Activated CD4-positive, alpha-beta memory T cell treated with anti-CD3 and anti-CD28 coated beads for 36 hours (primary cell): ENCODE measurements at regions of chr1 and their contacts with region 1.

Region 1: GRCh38 chr1:30779294-30780071 is 21.9 kb upstream of the LAPTM5 start:
- DNase-seq: peak; percentile 96
- H3K4me3 Mint-ChIP-seq: no peak overlapping the region
- H3K27ac Mint-ChIP-seq: no peak overlapping the region
- H3K4me1 Mint-ChIP-seq: peaks cover 5% of the 10 kb centered on the region
- H3K27me3 Mint-ChIP-seq: no peaks in the 10 kb centered on the region

Region 2: DNA sequence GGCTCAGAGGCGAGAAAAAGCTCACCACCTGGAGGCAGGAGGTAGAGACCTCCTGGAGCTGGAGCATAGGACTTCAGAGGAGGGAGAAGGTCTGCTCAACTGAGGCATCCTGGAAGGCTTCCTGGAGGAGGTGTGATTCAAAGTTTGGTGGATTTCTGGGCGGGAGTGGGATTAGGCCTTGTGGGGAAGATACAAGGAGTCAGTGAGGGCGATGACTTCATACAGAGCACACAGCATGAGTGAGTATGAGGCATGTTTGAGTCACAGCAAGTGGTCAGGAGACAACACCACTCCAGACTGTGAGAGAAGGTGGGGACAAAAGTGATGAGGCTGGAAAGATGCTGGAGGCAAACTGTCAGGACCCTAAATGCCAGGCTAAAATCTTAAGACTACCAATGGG is 133.7 kb before region 1 on chr1:
- CTCF ChIA-PET with region 1: no interaction called
- POLR2A ChIA-PET with region 1: no interaction called
- intact Hi-C with region 1: no loop called
- DNase-seq: no peak
- H3K4me3 Mint-ChIP-seq: no peak overlapping the region
- H3K27ac Mint-ChIP-seq: no peak overlapping the region
- H3K4me1 Mint-ChIP-seq: peaks cover 5% of the 10 kb centered on the region
- H3K27me3 Mint-ChIP-seq: peaks cover 36% of the 10 kb centered on the region

Region 3: DNA sequence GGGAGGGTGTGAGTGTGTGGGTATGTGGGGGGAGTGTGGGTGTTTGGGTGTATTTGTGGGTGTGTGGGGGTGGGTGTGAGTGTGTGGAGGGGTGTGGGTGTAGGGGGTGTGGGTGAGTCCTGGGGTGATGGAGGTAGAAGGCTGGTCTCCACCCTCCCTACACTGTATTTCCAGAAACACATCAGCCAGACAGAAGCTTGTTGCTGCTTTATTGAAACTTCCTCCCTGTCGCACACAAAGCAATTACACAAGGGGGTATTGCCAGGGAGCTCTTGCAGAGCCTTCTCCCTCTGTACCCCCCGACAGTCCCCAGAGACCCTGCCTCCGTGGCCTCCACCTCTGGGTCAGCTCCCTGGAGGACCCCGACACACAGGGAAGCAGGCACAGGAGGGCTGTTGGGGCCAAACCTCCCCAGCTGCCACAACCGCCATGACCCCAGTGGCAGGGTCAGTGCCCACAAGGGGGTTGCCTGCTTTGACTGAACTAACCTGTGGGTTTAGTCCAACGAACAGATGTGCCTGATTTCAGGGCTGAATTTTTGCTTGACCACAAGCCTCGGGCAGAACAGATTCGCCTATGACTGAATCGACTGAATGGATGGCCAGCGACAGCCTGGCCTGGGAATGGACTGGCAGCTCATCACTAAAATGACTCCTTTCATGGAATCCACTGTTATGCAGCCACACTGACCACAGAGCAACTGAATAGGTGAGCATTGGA is 47.0 kb before region 1 on chr1:
- CTCF ChIA-PET with region 1: interaction called, 81 read pairs
- POLR2A ChIA-PET with region 1: no interaction called
- intact Hi-C with region 1: no loop called
- DNase-seq: no peak
- H3K4me3 Mint-ChIP-seq: no peak overlapping the region
- H3K27ac Mint-ChIP-seq: peak overlapping the region; percentile 43
- H3K4me1 Mint-ChIP-seq: peaks cover 12% of the 10 kb centered on the region
- H3K27me3 Mint-ChIP-seq: no peaks in the 10 kb centered on the region

Region 4: DNA sequence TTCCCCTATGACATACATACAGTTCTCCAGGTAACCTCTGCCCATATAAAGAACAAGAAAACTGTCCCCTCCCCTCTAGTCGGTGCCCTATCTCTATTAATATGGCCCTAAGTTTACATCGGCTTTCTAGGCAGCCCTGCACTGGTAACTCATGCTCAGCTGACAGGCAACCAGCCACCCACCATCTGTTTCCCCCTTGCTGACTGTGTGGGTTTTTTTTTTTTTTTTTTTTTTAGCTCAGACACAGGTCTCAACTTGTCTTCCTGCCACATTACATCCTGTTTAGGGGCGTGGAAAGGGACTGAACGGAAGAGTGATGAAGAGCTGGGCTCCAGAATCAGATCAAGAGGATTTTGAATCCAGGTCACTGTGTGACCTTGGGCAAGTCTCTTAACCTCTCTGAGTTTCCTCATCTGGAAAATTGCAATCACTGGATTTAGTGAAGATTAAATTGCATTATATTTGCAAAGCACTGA is 35.9 kb before region 1 on chr1:
- CTCF ChIA-PET with region 1: interaction called, 63 read pairs
- POLR2A ChIA-PET with region 1: interaction called, 3 read pairs
- intact Hi-C with region 1: loop called (anchors 1 kb)
- DNase-seq: peak; percentile 80
- H3K4me3 Mint-ChIP-seq: peak overlapping the region; percentile 50
- H3K27ac Mint-ChIP-seq: peak overlapping the region; percentile 96
- H3K4me1 Mint-ChIP-seq: peaks cover 92% of the 10 kb centered on the region
- H3K27me3 Mint-ChIP-seq: no peaks in the 10 kb centered on the region

Region 5: DNA sequence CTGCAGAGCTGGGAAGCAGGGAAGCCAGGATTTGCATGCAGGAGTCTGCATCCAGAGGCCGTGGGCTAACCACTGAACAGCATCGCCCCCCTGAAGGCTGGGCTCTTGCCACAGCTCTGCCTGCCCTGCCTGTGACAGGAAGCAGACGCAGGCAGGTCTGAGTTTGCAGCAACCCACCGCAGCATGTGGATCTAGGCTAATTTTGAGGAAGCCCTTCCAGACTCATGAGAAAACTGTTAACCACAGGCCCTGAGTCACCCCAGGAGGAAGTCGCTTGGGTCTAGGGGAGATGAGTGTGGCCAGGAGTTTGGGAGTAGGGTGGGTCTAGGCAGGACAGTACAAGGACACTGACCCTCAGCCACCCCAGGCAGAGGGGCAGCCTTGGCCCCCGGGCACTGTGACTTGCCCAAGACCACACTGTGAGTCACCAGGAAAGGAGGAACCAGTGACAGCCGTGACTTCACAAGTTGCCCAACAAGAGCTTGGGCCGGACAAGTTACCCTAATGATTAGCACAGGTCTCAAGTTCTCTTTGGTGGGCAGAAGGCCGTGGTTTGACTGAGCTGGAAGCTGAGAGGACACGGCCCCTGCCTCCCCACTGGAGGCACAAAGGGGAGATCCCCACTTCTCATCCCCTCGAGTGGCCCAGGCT is 22.8 kb before region 1 on chr1:
- CTCF ChIA-PET with region 1: interaction called, 76 read pairs
- POLR2A ChIA-PET with region 1: interaction called, 3 read pairs
- intact Hi-C with region 1: loop called (anchors 2 kb)
- DNase-seq: peak; percentile 88
- H3K4me3 Mint-ChIP-seq: peak overlapping the region; percentile 98
- H3K27ac Mint-ChIP-seq: peak overlapping the region; percentile 99
- H3K4me1 Mint-ChIP-seq: peaks cover 86% of the 10 kb centered on the region
- H3K27me3 Mint-ChIP-seq: no peaks in the 10 kb centered on the region

Region 6: GRCh38 chr1:30764939-30765555 is 14.4 kb before region 1 on chr1:
- CTCF ChIA-PET with region 1: interaction called, 76 read pairs
- POLR2A ChIA-PET with region 1: interaction called, 3 read pairs
- intact Hi-C with region 1: no loop called
- DNase-seq: no peak
- H3K4me3 Mint-ChIP-seq: no peak overlapping the region
- H3K27ac Mint-ChIP-seq: peak overlapping the region; percentile 42
- H3K4me1 Mint-ChIP-seq: peaks cover 46% of the 10 kb centered on the region
- H3K27me3 Mint-ChIP-seq: no peaks in the 10 kb centered on the region

Region 7: DNA sequence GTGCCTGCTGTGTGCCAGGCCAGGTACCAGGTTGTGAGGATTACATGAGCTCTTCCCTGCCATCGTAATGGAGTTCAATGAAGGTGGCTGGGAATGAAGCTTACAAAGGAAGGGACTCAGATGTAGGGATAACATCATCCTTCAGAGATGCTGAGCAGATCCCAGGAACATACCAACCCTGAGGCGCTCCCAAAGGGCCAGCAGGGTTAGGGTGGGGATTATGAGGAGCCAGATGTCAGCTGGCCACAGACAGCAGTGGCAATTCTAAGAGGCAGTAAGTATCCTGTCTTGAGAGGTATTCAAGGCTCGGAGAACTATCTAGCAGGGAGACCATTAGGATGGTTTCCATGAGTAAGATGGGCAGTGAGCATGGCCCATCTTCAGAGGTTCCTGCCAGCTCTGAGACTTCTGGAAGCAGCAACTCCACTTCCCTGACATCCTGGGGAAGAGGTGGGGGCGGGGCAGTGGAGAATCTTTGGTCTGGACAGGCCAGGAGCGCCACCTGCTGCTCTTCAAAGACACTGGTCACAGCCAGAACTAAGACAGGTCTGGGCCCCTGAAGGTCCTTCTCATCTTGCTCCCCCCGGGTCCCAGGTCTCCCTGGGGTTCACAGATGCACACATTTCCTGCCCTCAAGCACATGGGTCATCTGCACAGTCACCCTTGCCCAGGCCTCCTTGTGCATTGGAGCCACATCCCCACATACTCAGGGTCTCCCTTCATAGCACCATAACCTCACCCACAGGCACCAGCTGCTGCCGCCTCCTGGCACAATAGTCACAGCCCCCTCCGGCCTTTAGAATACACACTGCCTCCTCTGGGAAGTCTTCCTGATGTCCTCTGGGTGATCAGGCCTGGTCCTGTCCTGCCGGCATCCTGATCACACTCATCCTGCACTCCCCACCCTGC is 131.8 kb after region 1 on chr1:
- CTCF ChIA-PET with region 1: interaction called, 46 read pairs
- POLR2A ChIA-PET with region 1: no interaction called
- intact Hi-C with region 1: loop called (anchors 1 kb)
- DNase-seq: peak; percentile 74
- H3K4me3 Mint-ChIP-seq: no peak overlapping the region
- H3K27ac Mint-ChIP-seq: no peak overlapping the region
- H3K4me1 Mint-ChIP-seq: peaks cover 8% of the 10 kb centered on the region
- H3K27me3 Mint-ChIP-seq: peaks cover 25% of the 10 kb centered on the region

Region 8: GRCh38 chr1:30929135-30929889 is 149.8 kb after region 1 on chr1:
- CTCF ChIA-PET with region 1: interaction called, 13 read pairs
- POLR2A ChIA-PET with region 1: no interaction called
- intact Hi-C with region 1: loop called (anchors 1 kb)
- DNase-seq: peak; percentile 60
- H3K4me3 Mint-ChIP-seq: no peak overlapping the region
- H3K27ac Mint-ChIP-seq: no peak overlapping the region
- H3K4me1 Mint-ChIP-seq: no peaks in the 10 kb centered on the region
- H3K27me3 Mint-ChIP-seq: no peaks in the 10 kb centered on the region

Region 9: DNA sequence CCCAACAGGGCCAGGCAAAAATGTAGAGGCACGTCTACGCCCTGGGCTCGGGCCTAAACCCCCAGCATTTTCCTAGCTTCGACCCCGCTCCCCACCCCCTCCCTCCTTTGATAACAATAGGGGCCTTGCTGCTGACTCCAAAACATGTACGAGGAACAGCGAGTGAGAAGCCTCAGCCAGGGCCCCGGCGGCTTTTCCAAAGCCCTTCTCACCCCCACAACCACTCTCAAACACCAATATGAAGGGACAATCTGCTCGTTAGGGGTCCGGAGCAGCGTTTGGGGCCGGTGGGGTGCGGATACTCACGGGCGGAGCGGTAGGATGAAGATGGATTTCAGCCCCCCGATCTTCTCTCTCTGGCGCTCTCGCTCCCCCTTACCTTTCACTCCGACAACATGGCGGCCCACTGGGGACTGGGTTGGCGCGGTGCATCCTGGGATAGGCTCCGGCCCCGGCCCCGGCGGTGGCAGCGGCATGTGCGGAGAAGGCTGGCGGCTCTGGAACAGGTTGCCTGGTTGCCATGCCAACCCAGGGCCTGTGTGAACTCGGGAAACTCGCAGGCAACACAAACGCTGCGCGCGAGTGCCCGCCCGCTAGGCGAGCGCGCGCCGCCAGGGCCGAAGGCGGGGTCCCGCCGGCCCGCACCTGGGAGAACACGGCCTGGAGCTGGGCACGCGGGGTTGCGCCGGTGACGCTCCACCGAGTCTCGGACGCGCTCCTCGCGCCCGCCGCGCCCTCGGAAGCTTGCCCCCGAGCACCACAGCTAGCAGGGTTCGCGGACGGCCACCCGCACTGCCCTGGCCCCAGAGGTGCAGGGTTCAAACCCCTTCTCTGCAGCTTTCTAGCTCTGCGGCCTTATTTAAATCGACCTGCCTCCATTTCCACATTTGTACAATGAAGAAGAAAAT is 286.1 kb after region 1 on chr1 and contains the start of gene PUM1:
- CTCF ChIA-PET with region 1: no interaction called
- POLR2A ChIA-PET with region 1: no interaction called
- intact Hi-C with region 1: no loop called
- DNase-seq: peak; percentile 99
- H3K4me3 Mint-ChIP-seq: peak within 1 kb of the TSS; percentile 98
- H3K27ac Mint-ChIP-seq: peak within 1 kb of the TSS; percentile 100
- H3K4me1 Mint-ChIP-seq: peaks cover 22% of the 10 kb centered on the region
- H3K27me3 Mint-ChIP-seq: peaks cover 2% of the 10 kb centered on the region
- total RNA-seq, gene PUM1: 77.8 to 80.5 TPM